Activated T-helper 1 cell treated with anti-CD3 and anti-CD28 coated beads, Interleukin-12 subunit alpha, Interleukin-12 subunit beta, Interleukin-2, Interleukin-4 antibody, amounts not matched to agents 30 ng/mL and 10 ng/mL and 1 ng/mL, durations not matched to agents 14 hours and 24 hours and 36 hours (primary cell): ENCODE measurements at regions of chr12 and their contacts with region 1.

Region 1: GRCh38 chr12:94459728-94460615 is at the start of gene CEP83:
- DNase-seq: peak; percentile 98
- H3K4me3 Mint-ChIP-seq: peak within 1 kb of the TSS; percentile 93
- H3K27ac Mint-ChIP-seq: peak within 1 kb of the TSS; percentile 95
- H3K4me1 Mint-ChIP-seq: peaks cover 28% of the 10 kb centered on the region
- H3K27me3 Mint-ChIP-seq: peaks cover 6% of the 10 kb centered on the region
- total RNA-seq, gene CEP83: 37.7 and 40.0 TPM in 2 replicates

Region 2: GRCh38 chr12:93677195-93678064 is 782.5 kb before region 1 on chr12 and contains the start of gene CRADD:
- intact Hi-C with region 1: loop called (anchors 2 kb)
- DNase-seq: peak; percentile 86
- H3K4me3 Mint-ChIP-seq: peak within 1 kb of the TSS; percentile 85
- H3K27ac Mint-ChIP-seq: peak within 1 kb of the TSS; percentile 96
- H3K4me1 Mint-ChIP-seq: peaks cover 38% of the 10 kb centered on the region
- H3K27me3 Mint-ChIP-seq: no peaks in the 10 kb centered on the region
- total RNA-seq, gene CRADD: 11.2 and 12.3 TPM in 2 replicates

Region 3: DNA sequence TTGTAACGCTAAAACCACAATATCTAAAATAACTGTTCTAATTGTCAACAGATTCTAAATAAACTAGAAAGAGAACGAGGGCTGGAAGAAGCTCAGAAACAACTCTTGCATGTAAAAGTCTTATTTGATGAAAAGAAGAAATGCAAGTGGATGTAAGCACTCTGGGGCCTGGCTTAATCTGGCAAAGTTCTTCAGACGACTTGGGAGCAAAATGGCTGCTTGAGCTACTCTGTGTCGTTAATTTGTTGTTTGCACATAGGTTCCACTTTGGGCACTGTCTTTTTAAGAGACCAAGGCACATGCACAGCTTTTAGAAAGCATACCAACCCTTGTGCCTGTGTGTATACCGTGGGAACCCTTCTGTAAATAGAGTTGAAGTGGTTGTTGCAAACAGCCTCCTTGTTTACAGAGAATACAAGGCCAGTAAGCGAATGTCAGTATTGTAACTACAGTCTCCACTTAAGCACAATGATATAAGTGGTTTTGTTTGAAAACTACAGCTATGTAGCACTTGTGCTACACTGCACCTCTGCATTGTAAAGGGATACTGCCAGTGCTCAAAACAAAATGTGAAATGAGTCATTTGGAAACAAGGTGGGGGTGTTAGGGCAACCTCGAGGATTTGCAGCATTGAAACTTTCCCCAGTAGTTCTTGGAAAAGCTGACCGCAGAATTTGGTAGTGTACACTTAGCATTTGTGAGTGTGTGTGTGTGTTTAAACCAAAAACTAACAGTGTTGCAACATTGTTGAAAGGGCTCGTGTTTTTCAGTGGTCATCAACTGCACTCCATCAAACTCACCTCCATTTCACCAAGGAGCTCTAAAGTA is 154.6 kb before region 1 on chr12:
- intact Hi-C with region 1: loop called (anchors 1 kb)
- DNase-seq: peak; percentile 75
- H3K4me3 Mint-ChIP-seq: peak overlapping the region; percentile 58
- H3K27ac Mint-ChIP-seq: peak overlapping the region; percentile 80
- H3K4me1 Mint-ChIP-seq: peaks cover 76% of the 10 kb centered on the region
- H3K27me3 Mint-ChIP-seq: no peaks in the 10 kb centered on the region

Region 4: GRCh38 chr12:94427501-94428381 is 32.2 kb before region 1 on chr12:
- intact Hi-C with region 1: loop called (anchors 1 kb)
- DNase-seq: no peak
- H3K4me3 Mint-ChIP-seq: no peak overlapping the region
- H3K27ac Mint-ChIP-seq: peak overlapping the region; percentile 49
- H3K4me1 Mint-ChIP-seq: peaks cover 18% of the 10 kb centered on the region
- H3K27me3 Mint-ChIP-seq: no peaks in the 10 kb centered on the region

Region 5: DNA sequence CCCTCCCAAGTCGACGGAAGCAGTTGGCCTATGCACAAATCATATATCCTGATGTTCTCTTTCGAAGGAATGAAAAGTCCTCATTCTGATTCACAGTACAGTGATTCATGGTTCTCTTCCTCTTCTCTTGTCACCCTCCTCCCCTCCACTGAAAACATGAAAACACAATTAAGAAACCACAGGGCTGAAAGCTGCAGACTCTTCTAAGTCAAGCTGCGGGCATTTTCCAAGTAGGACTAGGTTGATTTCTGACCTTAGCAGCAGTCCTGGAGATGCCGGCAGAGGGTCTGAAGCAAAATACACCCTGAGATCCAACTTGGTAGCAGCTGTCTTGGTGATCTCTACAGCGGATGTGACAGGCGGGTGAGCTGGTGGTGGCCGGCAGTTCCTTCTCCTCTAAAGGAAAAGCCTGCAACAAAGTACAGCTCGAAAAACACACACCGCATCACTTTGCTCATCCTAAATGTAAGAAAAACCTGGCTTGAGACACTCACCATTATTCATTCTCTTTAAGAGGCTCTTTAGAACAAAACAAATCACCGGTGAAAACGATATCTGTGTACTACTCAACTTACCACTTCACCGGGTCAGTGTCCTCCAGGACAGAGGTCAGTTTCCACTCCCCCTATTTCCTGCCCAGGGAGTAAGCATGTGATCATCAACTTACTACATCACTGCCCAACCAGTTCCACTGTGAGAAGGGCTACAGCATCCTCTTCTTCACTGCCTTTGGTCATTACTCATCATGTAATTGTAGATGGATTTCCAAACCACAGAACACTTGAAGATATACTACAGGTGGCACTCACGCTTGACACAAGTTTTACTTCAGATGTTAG is 184.4 kb after region 1 on chr12:
- intact Hi-C with region 1: loop called (anchors 5 kb)
- DNase-seq: no peak
- H3K4me3 Mint-ChIP-seq: peak overlapping the region; percentile 63
- H3K27ac Mint-ChIP-seq: peak overlapping the region; percentile 7
- H3K4me1 Mint-ChIP-seq: peaks cover 46% of the 10 kb centered on the region
- H3K27me3 Mint-ChIP-seq: peaks cover 68% of the 10 kb centered on the region